ENCODE measurements at regions of chr16 and their contacts with region 1.

Region 1: DNA sequence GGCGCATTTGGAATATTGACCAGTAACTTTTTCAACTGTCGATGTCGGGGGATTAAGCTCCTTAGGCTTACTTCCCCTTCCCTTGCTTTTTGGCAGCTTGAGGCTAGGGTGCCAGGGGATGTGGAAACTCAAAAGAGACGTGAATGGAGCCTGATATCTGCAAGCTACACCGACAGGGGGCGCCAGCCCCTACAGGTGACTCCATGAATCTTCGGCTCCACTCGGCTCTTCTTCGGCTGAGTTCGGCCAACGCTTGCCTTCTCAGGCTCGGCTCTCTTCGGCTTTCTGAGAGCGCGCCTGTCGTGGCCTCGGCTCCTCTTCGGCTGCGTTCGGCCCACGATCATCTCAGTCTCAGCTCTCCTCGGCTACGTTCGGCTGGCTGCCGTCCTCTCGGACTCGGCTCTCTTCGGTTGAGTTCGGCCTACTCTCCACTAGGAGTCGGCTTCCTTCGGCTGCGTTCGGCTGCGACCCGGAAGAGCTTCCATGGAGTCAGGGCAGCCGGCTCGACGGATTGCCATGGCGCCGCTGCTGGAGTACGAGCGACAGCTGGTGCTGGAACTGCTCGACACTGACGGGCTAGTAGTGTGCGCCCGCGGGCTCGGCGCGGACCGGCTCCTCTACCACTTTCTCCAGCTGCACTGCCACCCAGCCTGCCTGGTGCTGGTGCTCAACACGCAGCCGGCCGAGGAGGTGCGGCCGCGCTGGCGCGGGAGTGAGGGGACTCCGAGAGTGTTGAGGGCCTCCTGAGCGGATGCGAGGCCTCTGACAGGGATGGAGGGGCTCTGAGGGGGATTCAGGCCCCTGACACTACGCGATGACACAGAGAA is at the start of gene ERCC4:
- DNase-seq: peak; percentile 98
- ATAC-seq: peak; percentile 99
- H3K4me3 ChIP-seq: peak within 1 kb of the TSS; percentile 99
- H3K27ac ChIP-seq: no peak within 1 kb of the TSS
- H3K4me1 ChIP-seq: peaks cover 10% of the 10 kb centered on the region; the same call in 1 of the 2 replicates
- H3K27me3 ChIP-seq: no peaks in the 10 kb centered on the region
- CTCF ChIP-seq: peak; percentile 70
- total RNA-seq, gene ERCC4: 3.2 and 4.9 TPM in 2 replicates

Region 2: GRCh38 chr16:13471036-13471435 is 448.9 kb before region 1 on chr16:
- CTCF ChIA-PET with region 1: no interaction called
- POLR2A ChIA-PET with region 1: no interaction called
- intact Hi-C with region 1: no loop called
- DNase-seq: no peak
- ATAC-seq: no peak
- H3K4me3 ChIP-seq: no peak overlapping the region
- H3K27ac ChIP-seq: no peak overlapping the region
- H3K4me1 ChIP-seq: no peaks in the 10 kb centered on the region
- H3K27me3 ChIP-seq: no peaks in the 10 kb centered on the region
- CTCF ChIP-seq: no peak

Region 3: DNA sequence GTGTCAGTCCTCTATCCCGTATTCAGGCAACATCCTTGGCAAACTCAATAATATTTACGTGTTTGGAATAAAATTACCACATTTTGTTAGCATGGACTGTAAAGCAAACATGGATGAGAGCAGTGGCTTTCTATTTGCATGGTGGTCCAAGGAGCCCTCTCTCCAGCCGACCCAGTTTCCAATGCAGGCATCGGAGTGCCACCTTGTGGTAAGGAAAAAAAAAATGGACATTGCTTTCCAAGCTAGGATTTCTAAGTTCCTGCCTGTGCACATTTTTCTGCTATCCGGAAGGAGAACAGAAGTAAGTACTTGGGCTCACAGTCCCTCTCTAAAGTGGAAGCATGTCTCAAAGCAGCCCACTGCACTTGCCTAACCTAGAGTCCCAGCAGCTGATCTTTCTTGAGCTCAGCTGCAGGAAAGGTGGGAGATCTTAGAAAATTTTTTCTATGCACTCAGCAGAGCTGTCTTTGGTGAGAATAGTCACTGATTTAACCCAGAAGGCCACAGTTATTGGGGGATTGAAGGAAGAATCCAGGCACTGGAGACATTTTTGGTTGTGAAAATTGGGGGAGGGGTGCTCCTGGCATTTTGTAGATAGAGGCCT is 46.0 kb before region 1 on chr16:
- CTCF ChIA-PET with region 1: no interaction called
- POLR2A ChIA-PET with region 1: no interaction called
- intact Hi-C with region 1: no loop called
- DNase-seq: peak; percentile 28
- ATAC-seq: no peak
- H3K4me3 ChIP-seq: no peak overlapping the region
- H3K27ac ChIP-seq: no peak overlapping the region
- H3K4me1 ChIP-seq: no peaks in the 10 kb centered on the region
- H3K27me3 ChIP-seq: no peaks in the 10 kb centered on the region; the same call in 1 of the 2 replicates
- CTCF ChIP-seq: peak; percentile 65

Region 4: DNA sequence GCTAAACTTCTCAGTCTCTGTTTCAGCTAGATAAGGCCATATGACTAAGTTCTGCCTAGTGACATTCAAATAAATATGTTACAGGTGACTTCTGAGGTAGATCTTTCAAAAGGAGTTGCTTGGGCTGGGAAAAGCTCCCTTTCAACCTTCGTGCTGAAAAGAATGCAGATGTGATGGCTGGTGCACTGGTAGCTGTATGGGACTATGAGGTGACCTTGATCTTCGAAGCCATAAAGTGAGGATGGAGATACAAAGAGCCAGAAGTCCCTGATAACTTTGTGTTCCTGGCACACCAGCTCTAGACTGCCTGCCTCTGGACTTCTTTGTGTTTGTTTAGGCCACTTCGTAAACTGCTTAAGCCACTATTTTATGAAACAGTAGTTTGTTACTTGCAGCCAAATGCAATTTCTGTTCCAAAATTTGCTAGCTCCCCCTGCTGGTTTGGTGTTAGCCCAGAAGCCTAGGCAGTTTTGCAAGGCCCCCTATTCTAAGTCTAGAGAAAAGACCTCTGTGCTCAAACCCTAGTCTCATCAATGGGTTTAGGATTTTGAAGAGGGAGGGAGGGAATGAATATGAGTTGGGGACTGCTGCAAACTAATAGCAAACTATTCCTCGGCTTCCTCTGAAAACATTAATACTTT is 23.2 kb before region 1 on chr16:
- CTCF ChIA-PET with region 1: interaction called, 14 read pairs
- POLR2A ChIA-PET with region 1: no interaction called
- intact Hi-C with region 1: no loop called
- DNase-seq: peak; percentile 41
- ATAC-seq: no peak; the same call in 1 of the 2 replicates
- H3K4me3 ChIP-seq: no peak overlapping the region
- H3K27ac ChIP-seq: no peak overlapping the region
- H3K4me1 ChIP-seq: no peaks in the 10 kb centered on the region
- H3K27me3 ChIP-seq: peaks cover 25% of the 10 kb centered on the region
- CTCF ChIP-seq: peak; percentile 65

Region 5: DNA sequence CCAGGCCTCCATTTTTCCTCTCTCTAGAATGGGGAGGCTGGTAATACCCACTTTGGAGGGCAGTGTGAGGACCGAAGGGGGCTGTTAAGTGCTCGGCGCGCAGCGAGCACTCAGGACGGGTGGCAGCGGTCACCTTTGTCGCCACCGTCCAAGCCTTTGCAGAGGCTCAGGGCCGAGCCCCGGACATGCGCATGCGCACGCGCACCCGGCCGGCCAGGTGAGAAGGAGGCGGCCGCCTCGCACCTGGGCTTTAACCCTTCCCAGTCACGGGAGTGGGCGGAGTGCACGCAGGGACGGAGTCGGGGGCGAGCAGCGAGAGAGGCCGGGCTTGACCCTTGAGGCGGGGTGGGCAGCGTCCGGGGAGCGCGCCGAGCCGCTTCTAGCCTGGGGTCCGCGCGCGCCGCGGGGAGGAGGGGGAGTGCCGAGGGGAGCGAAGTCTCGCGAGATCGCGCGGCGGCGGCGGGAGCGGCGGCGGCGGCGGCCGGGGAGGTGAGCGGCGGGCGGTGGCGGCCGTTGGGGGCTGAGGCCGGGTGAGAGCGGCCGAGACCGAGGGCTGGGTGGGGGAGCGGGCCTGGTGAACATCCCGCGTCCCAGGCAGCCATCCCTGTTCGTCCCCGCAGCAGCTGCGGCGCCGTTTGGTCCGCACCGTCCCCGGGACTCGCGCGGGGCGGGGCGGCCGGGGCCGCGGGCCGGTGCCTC is 151.1 kb after region 1 on chr16 and contains the start of gene MRTFB:
- CTCF ChIA-PET with region 1: no interaction called
- POLR2A ChIA-PET with region 1: no interaction called
- intact Hi-C with region 1: loop called (anchors 5 kb)
- DNase-seq: peak; percentile 66
- ATAC-seq: peak; percentile 85
- H3K4me3 ChIP-seq: peak within 1 kb of the TSS; percentile 97
- H3K27ac ChIP-seq: peak within 1 kb of the TSS; percentile 30
- H3K4me1 ChIP-seq: peaks cover 18% of the 10 kb centered on the region
- H3K27me3 ChIP-seq: no peaks in the 10 kb centered on the region
- CTCF ChIP-seq: no peak
- total RNA-seq, gene MRTFB: 8.1 and 12.7 TPM in 2 replicates

Region 6: DNA sequence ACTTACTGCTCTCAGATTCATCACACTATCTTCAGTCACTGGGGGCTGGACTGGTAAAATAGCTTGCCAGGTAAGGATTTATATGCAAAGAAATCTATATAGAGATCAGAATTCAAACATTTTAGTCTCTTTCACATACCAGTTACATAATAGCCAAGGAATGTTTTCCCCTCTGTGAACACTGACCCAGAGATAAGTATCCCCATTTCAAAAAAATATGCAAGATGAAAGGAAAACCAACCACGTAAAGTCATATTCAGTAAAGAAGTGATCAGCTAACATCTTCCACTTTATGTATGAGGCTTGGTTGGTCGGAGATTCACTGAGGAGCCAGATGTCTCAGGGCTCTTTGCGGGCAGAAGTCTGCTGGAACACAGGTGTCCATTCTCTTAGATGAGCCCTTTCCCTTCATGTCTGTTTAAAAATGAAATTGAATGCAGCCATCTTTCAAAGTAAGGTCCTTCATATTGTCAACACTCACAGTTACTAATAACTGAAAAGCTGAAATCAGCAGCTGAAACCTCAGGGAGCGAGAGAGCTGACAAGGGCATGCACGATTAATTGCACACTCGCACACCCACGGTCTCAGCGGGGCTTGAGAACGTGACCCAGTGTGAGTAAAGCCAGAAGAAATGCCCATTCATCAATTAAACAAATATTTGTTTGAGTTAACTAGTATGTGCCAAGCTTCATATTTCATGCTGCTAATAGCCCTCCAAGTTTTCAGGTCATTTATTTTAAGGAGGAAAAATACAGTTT is 312.4 kb after region 1 on chr16:
- CTCF ChIA-PET with region 1: no interaction called
- POLR2A ChIA-PET with region 1: interaction called, 3 read pairs
- intact Hi-C with region 1: loop called (anchors 5 kb)
- DNase-seq: peak; percentile 3
- ATAC-seq: peak; percentile 82
- H3K4me3 ChIP-seq: no peak overlapping the region
- H3K27ac ChIP-seq: no peak overlapping the region
- H3K4me1 ChIP-seq: peaks cover 9% of the 10 kb centered on the region
- H3K27me3 ChIP-seq: no peaks in the 10 kb centered on the region
- CTCF ChIP-seq: no peak

Region 7: DNA sequence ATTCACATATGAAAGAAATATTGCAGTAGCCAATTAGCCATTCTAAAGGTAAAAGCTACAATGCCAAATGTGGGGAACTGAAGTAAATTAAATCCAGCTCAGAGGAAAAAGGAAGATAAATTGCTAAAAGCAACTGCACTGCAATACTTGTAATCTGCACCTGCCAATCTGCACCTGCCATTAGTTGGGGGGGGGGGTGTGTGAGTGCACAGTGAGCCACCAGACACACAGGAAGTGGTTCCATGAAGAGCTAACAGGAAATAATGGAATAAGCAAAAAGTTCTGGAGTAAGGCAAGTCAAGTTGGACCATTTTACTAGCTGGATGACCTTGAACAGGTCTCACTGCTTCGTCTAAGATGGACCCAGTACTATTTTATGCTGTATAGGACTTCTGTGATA is 518.4 kb after region 1 on chr16:
- CTCF ChIA-PET with region 1: interaction called, 11 read pairs
- POLR2A ChIA-PET with region 1: no interaction called
- intact Hi-C with region 1: no loop called
- DNase-seq: no peak
- ATAC-seq: no peak
- H3K4me3 ChIP-seq: no peak overlapping the region
- H3K27ac ChIP-seq: no peak overlapping the region
- H3K4me1 ChIP-seq: no peaks in the 10 kb centered on the region
- H3K27me3 ChIP-seq: no peaks in the 10 kb centered on the region
- CTCF ChIP-seq: no peak

Measured in PC-3 (cell line).